Naive thymus-derived CD4-positive, alpha-beta T cell (primary cell): ENCODE measurements at regions of chr6 and their contacts with region 1.

Region 1: GRCh38 chr6:20092071-20092566 is 120.2 kb downstream of the MBOAT1 start:
- DNase-seq: peak in 5 of 9 donors; percentile 10 to 23 (median 14)
- ATAC-seq: no peak
- H3K4me3 ChIP-seq: no peak overlapping the region
- H3K4me3 Mint-ChIP-seq: no peak overlapping the region
- H3K27ac ChIP-seq: no peak overlapping the region
- H3K27ac Mint-ChIP-seq: no peak overlapping the region
- H3K4me1 ChIP-seq: no peaks in the 10 kb centered on the region
- H3K4me1 Mint-ChIP-seq: no peaks in the 10 kb centered on the region
- H3K27me3 ChIP-seq: no peaks in the 10 kb centered on the region
- H3K27me3 Mint-ChIP-seq: no peaks in the 10 kb centered on the region

Region 2: DNA sequence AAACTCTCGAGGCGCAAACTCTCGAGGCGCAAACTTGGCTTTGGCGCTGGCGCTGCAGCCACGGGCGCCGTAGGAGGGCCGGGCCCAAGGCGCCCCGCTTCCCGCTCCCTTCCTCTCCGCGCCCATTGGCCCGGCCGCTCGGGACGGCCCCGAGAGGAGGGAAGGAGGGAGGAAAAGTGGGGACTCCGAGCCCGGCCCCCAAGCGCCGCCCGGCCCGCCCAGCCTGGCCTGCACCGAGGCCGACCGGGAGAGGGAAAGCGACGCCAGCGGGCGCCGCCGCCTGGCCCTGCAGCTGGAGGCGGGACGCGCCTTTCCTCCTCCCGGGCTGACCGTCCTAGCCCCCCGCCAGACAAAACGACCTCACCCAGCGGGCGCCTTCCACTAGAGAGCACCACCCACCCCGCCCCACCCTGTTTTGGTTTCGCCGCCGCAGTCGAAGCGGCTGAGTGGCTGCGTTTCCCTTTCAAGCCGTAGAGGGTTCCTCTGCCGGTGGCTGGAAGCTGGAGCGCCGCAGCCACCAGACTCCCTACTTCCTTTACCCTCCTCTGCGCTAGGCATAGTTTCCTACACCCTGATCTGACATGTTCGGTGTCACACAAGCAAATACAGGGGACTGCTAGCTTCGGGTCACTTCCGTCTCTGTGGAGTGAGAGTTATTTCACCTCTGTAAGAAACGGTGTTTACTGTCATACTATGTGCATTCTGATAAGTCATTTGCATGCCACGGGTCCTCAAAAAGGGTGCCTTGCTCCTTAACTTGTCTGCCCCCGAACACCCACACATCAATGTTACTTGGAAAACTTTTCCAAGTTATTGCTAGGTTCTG is 120.5 kb after region 1 on chr6 and contains the start of gene MBOAT1:
- CTCF ChIA-PET with region 1: no interaction called
- POLR2A ChIA-PET with region 1: no interaction called
- intact Hi-C with region 1: loop called in 1 of 2 experiments (anchors 5 kb)
- DNase-seq: peak; percentile 38 to 85 (median 54)
- ATAC-seq: peak; percentile 82
- H3K4me3 ChIP-seq: peak within 1 kb of the TSS; percentile 73
- H3K4me3 Mint-ChIP-seq: peak within 1 kb of the TSS; percentile 82 to 99 (median 96)
- H3K27ac ChIP-seq: peak within 1 kb of the TSS; percentile 62
- H3K27ac Mint-ChIP-seq: peak within 1 kb of the TSS; percentile 56 to 94 (median 91)
- H3K4me1 ChIP-seq: peaks cover 11 to 20% of the 10 kb centered on the region in 2 donors
- H3K4me1 Mint-ChIP-seq: peaks cover 18 to 41% (median 27%) of the 10 kb centered on the region in 7 donors
- H3K27me3 ChIP-seq: no peaks in the 10 kb centered on the region
- H3K27me3 Mint-ChIP-seq: peaks cover 0 to 5% (median 0%) of the 10 kb centered on the region in 5 donors
- total RNA-seq, gene MBOAT1: 6.2 to 24.7 (median 10.0) TPM

Region 3: GRCh38 chr6:20266851-20267608 is 174.9 kb after region 1 on chr6:
- CTCF ChIA-PET with region 1: interaction called, 3 read pairs
- POLR2A ChIA-PET with region 1: no interaction called
- intact Hi-C with region 1: loop called in 1 of 2 experiments (anchors 1 kb)
- DNase-seq: no peak
- ATAC-seq: no peak
- H3K4me3 ChIP-seq: no peak overlapping the region
- H3K4me3 Mint-ChIP-seq: no peak overlapping the region
- H3K27ac ChIP-seq: no peak overlapping the region
- H3K27ac Mint-ChIP-seq: peak overlapping the region in 1 of 9 donors; percentile 21
- H3K4me1 ChIP-seq: no peaks in the 10 kb centered on the region
- H3K4me1 Mint-ChIP-seq: peaks cover 0 to 4% (median 0%) of the 10 kb centered on the region in 7 donors
- H3K27me3 ChIP-seq: no peaks in the 10 kb centered on the region
- H3K27me3 Mint-ChIP-seq: peaks cover 0 to 17% (median 4%) of the 10 kb centered on the region in 5 donors

Region 4: GRCh38 chr6:20534295-20535262 is 442.5 kb after region 1 on chr6 and contains the start of gene CDKAL1:
- CTCF ChIA-PET with region 1: no interaction called
- POLR2A ChIA-PET with region 1: no interaction called
- intact Hi-C with region 1: loop called in 1 of 2 experiments (anchors 1 kb)
- DNase-seq: peak; percentile 69 to 89 (median 86)
- ATAC-seq: peak; percentile 95
- H3K4me3 ChIP-seq: peak within 1 kb of the TSS; percentile 92
- H3K4me3 Mint-ChIP-seq: peak within 1 kb of the TSS; percentile 88 to 100 (median 97)
- H3K27ac ChIP-seq: peak within 1 kb of the TSS; percentile 89
- H3K27ac Mint-ChIP-seq: peak within 1 kb of the TSS; percentile 94 to 100 (median 99)
- H3K4me1 ChIP-seq: peaks cover 0 to 11% of the 10 kb centered on the region in 2 donors
- H3K4me1 Mint-ChIP-seq: peaks cover 22 to 53% (median 41%) of the 10 kb centered on the region in 7 donors
- H3K27me3 ChIP-seq: no peaks in the 10 kb centered on the region
- H3K27me3 Mint-ChIP-seq: peaks cover 0 to 4% (median 0%) of the 10 kb centered on the region in 5 donors
- total RNA-seq, gene CDKAL1: 23.6 to 30.3 (median 25.0) TPM